ENCODE measurements at regions of chr9 and their contacts with region 1.

Region 1: GRCh38 chr9:116860509-116861120 is 173.5 kb downstream of the TRIM32 start:
- DNase-seq: peak; percentile 32
- ATAC-seq: peak; percentile 71
- H3K4me3 ChIP-seq: no peak overlapping the region
- H3K27ac ChIP-seq: no peak overlapping the region
- H3K4me1 ChIP-seq: no peaks in the 10 kb centered on the region
- H3K27me3 ChIP-seq: no peaks in the 10 kb centered on the region
- CTCF ChIP-seq: peak; percentile 69

Region 2: DNA sequence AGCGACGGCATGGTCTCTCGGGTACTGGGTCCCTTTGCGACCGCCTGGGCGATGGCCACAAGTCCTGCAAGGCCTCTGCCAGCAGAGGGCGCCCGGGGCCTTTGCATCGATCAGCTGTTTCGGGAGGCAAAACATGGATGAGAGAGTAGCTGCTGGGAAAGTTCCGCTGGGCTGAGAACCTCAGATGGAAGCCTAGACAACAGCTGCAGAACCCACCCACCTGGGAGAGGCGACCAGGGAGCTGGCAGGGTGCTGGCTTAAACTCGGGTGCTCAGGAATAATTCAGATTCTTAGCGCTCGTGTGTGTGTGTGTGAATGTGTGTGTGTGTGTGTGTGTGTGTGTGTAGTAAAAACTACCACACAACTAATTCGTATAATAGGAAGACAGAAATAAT is 123.5 kb before region 1 on chr9:
- CTCF ChIA-PET with region 1: interaction called, 15 read pairs
- POLR2A ChIA-PET with region 1: no interaction called
- in situ Hi-C with region 1: no loop called
- intact Hi-C with region 1: loop called (anchors 1 kb)
- DNase-seq: peak; percentile 33
- ATAC-seq: peak; percentile 94
- H3K4me3 ChIP-seq: no peak overlapping the region
- H3K27ac ChIP-seq: no peak overlapping the region
- H3K4me1 ChIP-seq: no peaks in the 10 kb centered on the region
- H3K27me3 ChIP-seq: no peaks in the 10 kb centered on the region
- CTCF ChIP-seq: peak; percentile 90